Motor neuron (in vitro differentiated cells): ENCODE measurements at regions of chr12 and their contacts with region 1.

Region 1: DNA sequence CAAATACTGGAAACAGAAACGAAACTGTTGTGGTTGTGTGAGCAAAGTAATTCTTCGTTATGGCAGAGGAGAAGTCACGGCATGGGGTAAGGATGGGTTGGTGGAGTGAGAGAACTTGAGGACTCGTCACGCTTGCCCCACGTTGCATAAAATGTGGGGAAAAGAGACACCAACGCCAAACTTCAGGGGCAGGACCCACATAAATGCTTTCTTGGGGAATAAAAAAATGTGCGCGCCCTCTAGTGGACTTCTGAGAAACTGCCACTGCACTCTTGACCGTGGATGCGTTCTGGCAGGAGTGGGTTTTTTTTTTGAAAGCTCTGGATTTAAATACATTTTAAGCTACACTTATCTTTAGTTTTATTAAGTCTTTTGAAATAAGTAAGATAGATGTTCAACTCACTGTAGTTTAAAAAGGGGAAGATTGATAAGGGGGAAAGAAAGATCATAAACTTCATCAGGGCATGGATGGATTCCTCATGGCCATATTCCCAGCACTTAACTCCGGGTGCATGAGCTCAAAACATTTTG is 4.1 kb upstream of the IGF1 start:
- ATAC-seq: peak in 3 of 8 experiments; percentile 14 to 60 (median 56)
- H3K4me3 ChIP-seq: no peak overlapping the region
- H3K27ac ChIP-seq: no peak overlapping the region
- H3K4me1 ChIP-seq: no peaks in the 10 kb centered on the region

Region 2: GRCh38 chr12:101939856-101940265 is 544.6 kb before region 1 on chr12:
- in situ Hi-C with region 1: loop called in 2 of 9 experiments (anchors 25 kb)
- ATAC-seq: peak; percentile 1 to 67 (median 48)
- H3K4me3 ChIP-seq: no peak overlapping the region
- H3K27ac ChIP-seq: no peak overlapping the region
- H3K4me1 ChIP-seq: no peaks in the 10 kb centered on the region

Region 3: GRCh38 chr12:102169922-102170621 is 314.4 kb before region 1 on chr12:
- in situ Hi-C with region 1: loop called in 1 of 9 experiments (anchors 25 kb)
- ATAC-seq: peak in 4 of 8 experiments; percentile 21 to 50 (median 36)
- H3K4me3 ChIP-seq: no peak overlapping the region
- H3K27ac ChIP-seq: no peak overlapping the region
- H3K4me1 ChIP-seq: no peaks in the 10 kb centered on the region

Region 4: GRCh38 chr12:102298022-102298421 is 186.5 kb before region 1 on chr12:
- in situ Hi-C with region 1: loop called in 1 of 9 experiments (anchors 25 kb)
- ATAC-seq: peak in 1 of 8 experiments; percentile 60
- H3K4me3 ChIP-seq: no peak overlapping the region
- H3K27ac ChIP-seq: no peak overlapping the region
- H3K4me1 ChIP-seq: no peaks in the 10 kb centered on the region

Region 5: DNA sequence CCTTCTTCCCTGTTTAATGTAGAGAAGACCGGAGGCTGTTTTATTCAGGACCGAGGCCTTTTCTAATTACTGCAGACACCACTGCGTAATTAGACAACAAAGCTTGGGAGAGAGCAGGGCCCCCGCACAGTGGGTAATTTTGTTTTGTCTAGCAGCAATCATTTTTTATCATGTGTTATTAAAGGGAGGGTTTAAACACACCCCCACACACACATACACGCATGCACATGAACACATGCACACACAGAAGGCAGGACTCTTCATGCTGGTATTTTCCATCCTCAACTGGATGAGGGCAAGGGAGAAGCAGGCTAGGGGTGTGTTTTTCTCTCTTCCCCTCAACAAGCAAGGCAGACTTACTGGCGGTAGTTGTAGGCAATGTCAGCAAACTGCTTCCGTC is 381.7 kb after region 1 on chr12:
- in situ Hi-C with region 1: no loop called
- ATAC-seq: peak in 4 of 8 experiments; percentile 35 to 85 (median 64)
- H3K4me3 ChIP-seq: no peak overlapping the region
- H3K27ac ChIP-seq: no peak overlapping the region
- H3K4me1 ChIP-seq: peaks cover 4 to 9% of the 10 kb centered on the region in 2 donors